A673 (cell line): ENCODE measurements at regions of chr1 and their contacts with region 1.

Region 1: GRCh38 chr1:37682334-37682987 is 9.9 kb upstream of the CDCA8 start:
- DNase-seq: peak; percentile 69
- H3K4me3 ChIP-seq: no peak overlapping the region
- H3K27ac ChIP-seq: no peak overlapping the region
- H3K4me1 ChIP-seq: no peaks in the 10 kb centered on the region
- H3K27me3 ChIP-seq: no peaks in the 10 kb centered on the region
- CTCF ChIP-seq: peak; percentile 91

Region 2: DNA sequence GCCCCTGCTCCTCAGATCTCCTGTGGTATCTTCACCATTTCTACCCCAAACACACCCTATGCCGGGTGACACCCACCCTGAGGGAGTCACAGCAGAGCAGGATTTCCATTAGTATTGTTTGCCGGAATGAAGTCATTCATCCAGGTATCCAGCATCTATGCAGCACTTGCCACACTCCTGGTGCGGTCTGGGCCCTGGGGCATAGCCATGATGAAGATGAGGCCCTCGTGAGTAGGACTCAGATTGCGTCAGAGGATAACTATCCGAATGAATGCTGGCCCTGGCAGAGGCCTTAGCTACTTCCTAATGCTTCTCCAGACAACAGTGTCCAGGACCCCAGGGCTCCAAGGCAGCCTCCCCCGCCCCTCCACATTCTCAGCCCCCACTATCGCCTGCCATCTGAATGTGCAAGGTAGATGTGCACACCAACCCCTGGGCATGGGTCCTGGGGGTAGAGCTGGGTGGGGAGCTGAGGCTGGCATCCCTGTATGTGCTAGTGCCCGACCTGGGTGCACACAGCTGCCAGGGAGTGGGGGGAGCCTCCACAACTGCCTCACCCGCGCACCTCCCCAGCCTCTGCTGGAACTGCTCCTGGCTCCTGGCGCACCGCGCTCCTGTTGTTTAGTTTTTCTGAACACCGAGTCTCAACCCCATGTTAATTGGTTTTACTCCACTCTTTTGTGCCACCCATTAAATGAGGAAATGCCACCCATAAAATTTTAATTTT is 233.6 kb before region 1 on chr1:
- CTCF ChIA-PET with region 1: no interaction called
- POLR2A ChIA-PET with region 1: no interaction called
- intact Hi-C with region 1: loop called (anchors 2 kb)
- DNase-seq: no peak
- H3K4me3 ChIP-seq: no peak overlapping the region
- H3K27ac ChIP-seq: no peak overlapping the region
- H3K4me1 ChIP-seq: no peaks in the 10 kb centered on the region
- H3K27me3 ChIP-seq: no peaks in the 10 kb centered on the region
- CTCF ChIP-seq: no peak

Region 3: GRCh38 chr1:37602750-37603694 is 79.4 kb before region 1 on chr1:
- CTCF ChIA-PET with region 1: interaction called, 5 read pairs
- POLR2A ChIA-PET with region 1: no interaction called
- intact Hi-C with region 1: loop called (anchors 1 kb)
- DNase-seq: peak; percentile 63
- H3K4me3 ChIP-seq: no peak overlapping the region
- H3K27ac ChIP-seq: no peak overlapping the region
- H3K4me1 ChIP-seq: no peaks in the 10 kb centered on the region
- H3K27me3 ChIP-seq: peaks cover 26% of the 10 kb centered on the region
- CTCF ChIP-seq: peak; percentile 83